ENCODE measurements at regions of chr13 and their contacts with region 1.

Region 1: GRCh38 chr13:40315416-40316064 is 350.9 kb downstream of the FOXO1 start:
- DNase-seq: peak; percentile 79
- ATAC-seq: peak; percentile 82
- H3K4me3 Mint-ChIP-seq: peak overlapping the region; percentile 46
- H3K27ac Mint-ChIP-seq: peak overlapping the region; percentile 63
- H3K4me1 Mint-ChIP-seq: peaks cover 69% of the 10 kb centered on the region
- H3K27me3 Mint-ChIP-seq: no peaks in the 10 kb centered on the region

Region 2: GRCh38 chr13:40221460-40222201 is 93.9 kb before region 1 on chr13:
- CTCF ChIA-PET with region 1: no interaction called
- POLR2A ChIA-PET with region 1: no interaction called
- intact Hi-C with region 1: loop called in 1 of 2 experiments (anchors 2 kb)
- DNase-seq: peak; percentile 62
- ATAC-seq: peak; percentile 63
- H3K4me3 Mint-ChIP-seq: peak overlapping the region; percentile 45
- H3K27ac Mint-ChIP-seq: peak overlapping the region; percentile 91
- H3K4me1 Mint-ChIP-seq: peaks cover 61% of the 10 kb centered on the region
- H3K27me3 Mint-ChIP-seq: no peaks in the 10 kb centered on the region

Region 3: DNA sequence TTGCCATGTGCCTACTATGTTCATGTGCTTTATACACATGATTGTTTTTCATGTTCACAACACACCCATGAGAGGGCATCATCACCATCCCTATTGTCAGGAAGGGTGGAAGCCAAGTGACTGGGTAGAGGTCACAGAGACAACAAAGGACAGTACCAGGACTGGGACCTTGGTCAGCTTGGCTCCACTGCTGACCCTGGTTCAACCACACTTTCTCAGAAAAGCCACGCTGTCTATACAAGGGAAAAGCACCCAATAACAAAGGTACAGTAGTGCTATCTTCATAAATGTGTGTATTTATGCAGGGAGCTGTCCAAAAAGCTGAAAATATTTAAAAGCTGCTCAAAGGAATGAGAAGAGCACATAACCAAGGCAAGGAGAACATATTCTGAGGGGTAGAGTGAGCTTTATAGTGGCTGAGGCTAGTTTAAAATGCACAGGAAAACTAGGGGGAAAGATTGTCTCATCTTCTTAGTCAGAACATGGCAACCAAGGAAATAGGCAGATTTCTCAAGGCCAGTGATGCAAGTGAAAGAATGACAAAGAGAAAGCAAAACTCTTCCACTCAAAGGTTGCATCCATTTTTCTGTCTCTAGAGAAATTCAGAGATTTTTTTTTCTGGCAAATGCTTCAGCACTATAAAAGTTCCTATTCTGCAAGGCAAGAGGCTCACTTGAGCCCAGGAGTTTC is 64.1 kb before region 1 on chr13:
- CTCF ChIA-PET with region 1: no interaction called
- POLR2A ChIA-PET with region 1: no interaction called
- intact Hi-C with region 1: loop called in 1 of 2 experiments (anchors 2 kb)
- DNase-seq: peak; percentile 23
- ATAC-seq: peak; percentile 87
- H3K4me3 Mint-ChIP-seq: no peak overlapping the region
- H3K27ac Mint-ChIP-seq: peak overlapping the region; percentile 82
- H3K4me1 Mint-ChIP-seq: peaks cover 50% of the 10 kb centered on the region
- H3K27me3 Mint-ChIP-seq: no peaks in the 10 kb centered on the region

Region 4: GRCh38 chr13:40503966-40504591 is 188.5 kb after region 1 on chr13:
- CTCF ChIA-PET with region 1: no interaction called
- POLR2A ChIA-PET with region 1: no interaction called
- intact Hi-C with region 1: no loop called
- DNase-seq: no peak
- ATAC-seq: no peak
- H3K4me3 Mint-ChIP-seq: no peak overlapping the region
- H3K27ac Mint-ChIP-seq: no peak overlapping the region
- H3K4me1 Mint-ChIP-seq: peaks cover 46% of the 10 kb centered on the region
- H3K27me3 Mint-ChIP-seq: no peaks in the 10 kb centered on the region